ENCODE measurements at regions of chr12 and their contacts with region 1.

Region 1: GRCh38 chr12:131536337-131536736 is 174.6 kb upstream of the SFSWAP start:
- DNase-seq: peak in 7 of 9 experiments; percentile 5 to 55 (median 35)
- ATAC-seq: peak; percentile 77
- H3K4me3 ChIP-seq: no peak overlapping the region
- H3K4me3 Mint-ChIP-seq: no peak overlapping the region
- H3K27ac ChIP-seq: peak overlapping the region in 1 of 2 experiments; percentile 46
- H3K27ac Mint-ChIP-seq: peak overlapping the region; percentile 78
- H3K4me1 ChIP-seq: peaks cover 14% of the 10 kb centered on the region
- H3K4me1 Mint-ChIP-seq: peaks cover 15% of the 10 kb centered on the region
- H3K27me3 ChIP-seq: no peaks in the 10 kb centered on the region
- H3K27me3 Mint-ChIP-seq: peaks cover 2% of the 10 kb centered on the region
- CTCF ChIP-seq: no peak

Region 2: DNA sequence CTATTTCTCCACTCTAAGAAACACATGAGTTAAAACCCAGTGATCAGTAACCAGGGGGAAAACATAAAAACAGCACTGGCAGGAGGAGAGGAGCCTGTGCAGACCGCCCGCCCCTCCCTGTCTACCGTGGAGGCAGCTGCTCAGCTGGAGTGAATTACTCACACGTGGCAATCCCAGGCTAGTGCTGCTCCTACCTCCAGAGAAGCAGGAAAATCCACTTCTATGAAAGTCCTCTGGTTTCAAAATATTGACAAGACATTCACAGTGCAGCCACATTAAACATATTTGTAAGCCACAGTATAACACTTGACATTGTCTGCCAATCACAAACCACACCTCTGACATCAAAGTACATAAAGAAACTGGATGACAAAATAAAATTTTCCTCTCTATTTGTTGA is 1649.2 kb before region 1 on chr12:
- CTCF ChIA-PET with region 1: no interaction called
- POLR2A ChIA-PET with region 1: no interaction called
- intact Hi-C with region 1: loop called in 1 of 2 experiments (anchors 10 kb)
- DNase-seq: no peak
- ATAC-seq: no peak
- H3K4me3 ChIP-seq: no peak overlapping the region
- H3K4me3 Mint-ChIP-seq: no peak overlapping the region
- H3K27ac ChIP-seq: no peak overlapping the region
- H3K27ac Mint-ChIP-seq: no peak overlapping the region
- H3K4me1 ChIP-seq: no peaks in the 10 kb centered on the region
- H3K4me1 Mint-ChIP-seq: no peaks in the 10 kb centered on the region
- H3K27me3 ChIP-seq: no peaks in the 10 kb centered on the region
- H3K27me3 Mint-ChIP-seq: no peaks in the 10 kb centered on the region
- CTCF ChIP-seq: no peak

Region 3: DNA sequence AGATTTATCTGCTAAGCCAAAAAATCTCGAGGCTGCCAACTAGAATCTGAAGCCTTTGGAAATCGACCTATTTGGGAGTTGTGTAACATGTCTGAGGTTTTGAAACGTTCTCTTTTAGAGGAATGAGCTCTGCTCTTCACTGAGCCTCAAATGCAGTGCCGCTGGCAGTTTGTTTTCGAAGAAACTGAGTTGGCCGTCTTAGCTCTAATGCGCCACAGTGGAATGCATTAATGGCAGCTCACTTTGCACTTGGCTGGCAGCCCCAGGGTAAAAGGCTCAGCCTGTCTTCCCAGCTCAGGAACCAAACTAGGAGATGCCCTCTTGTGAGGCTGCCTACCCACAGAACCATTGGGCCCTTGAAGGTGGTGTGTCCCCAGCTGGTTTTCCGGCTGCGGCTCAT is 228.4 kb after region 1 on chr12:
- CTCF ChIA-PET with region 1: no interaction called
- POLR2A ChIA-PET with region 1: no interaction called
- intact Hi-C with region 1: no loop called
- DNase-seq: no peak
- ATAC-seq: no peak
- H3K4me3 ChIP-seq: no peak overlapping the region
- H3K4me3 Mint-ChIP-seq: no peak overlapping the region
- H3K27ac ChIP-seq: no peak overlapping the region
- H3K27ac Mint-ChIP-seq: no peak overlapping the region
- H3K4me1 ChIP-seq: no peaks in the 10 kb centered on the region
- H3K4me1 Mint-ChIP-seq: no peaks in the 10 kb centered on the region
- H3K27me3 ChIP-seq: no peaks in the 10 kb centered on the region
- H3K27me3 Mint-ChIP-seq: no peaks in the 10 kb centered on the region
- CTCF ChIP-seq: no peak

Measured in CD8-positive, alpha-beta T cell (primary cell).